Activated T-helper 1 cell treated with anti-CD3 and anti-CD28 coated beads, Interleukin-12 subunit alpha, Interleukin-12 subunit beta, Interleukin-2, Interleukin-4 antibody, amounts not matched to agents 30 ng/mL and 10 ng/mL and 1 ng/mL, durations not matched to agents 14 hours and 24 hours and 36 hours (primary cell): ENCODE measurements at regions of chr19 and their contacts with region 1.

Region 1: GRCh38 chr19:57410877-57411671 is at the start of gene ZNF17:
- DNase-seq: peak; percentile 87
- H3K4me3 Mint-ChIP-seq: peak within 1 kb of the TSS; percentile 95
- H3K27ac Mint-ChIP-seq: peak within 1 kb of the TSS; percentile 81
- H3K4me1 Mint-ChIP-seq: peaks cover 18% of the 10 kb centered on the region
- H3K27me3 Mint-ChIP-seq: no peaks in the 10 kb centered on the region
- total RNA-seq, gene ZNF17: 7.9 and 11.0 TPM in 2 replicates

Region 2: DNA sequence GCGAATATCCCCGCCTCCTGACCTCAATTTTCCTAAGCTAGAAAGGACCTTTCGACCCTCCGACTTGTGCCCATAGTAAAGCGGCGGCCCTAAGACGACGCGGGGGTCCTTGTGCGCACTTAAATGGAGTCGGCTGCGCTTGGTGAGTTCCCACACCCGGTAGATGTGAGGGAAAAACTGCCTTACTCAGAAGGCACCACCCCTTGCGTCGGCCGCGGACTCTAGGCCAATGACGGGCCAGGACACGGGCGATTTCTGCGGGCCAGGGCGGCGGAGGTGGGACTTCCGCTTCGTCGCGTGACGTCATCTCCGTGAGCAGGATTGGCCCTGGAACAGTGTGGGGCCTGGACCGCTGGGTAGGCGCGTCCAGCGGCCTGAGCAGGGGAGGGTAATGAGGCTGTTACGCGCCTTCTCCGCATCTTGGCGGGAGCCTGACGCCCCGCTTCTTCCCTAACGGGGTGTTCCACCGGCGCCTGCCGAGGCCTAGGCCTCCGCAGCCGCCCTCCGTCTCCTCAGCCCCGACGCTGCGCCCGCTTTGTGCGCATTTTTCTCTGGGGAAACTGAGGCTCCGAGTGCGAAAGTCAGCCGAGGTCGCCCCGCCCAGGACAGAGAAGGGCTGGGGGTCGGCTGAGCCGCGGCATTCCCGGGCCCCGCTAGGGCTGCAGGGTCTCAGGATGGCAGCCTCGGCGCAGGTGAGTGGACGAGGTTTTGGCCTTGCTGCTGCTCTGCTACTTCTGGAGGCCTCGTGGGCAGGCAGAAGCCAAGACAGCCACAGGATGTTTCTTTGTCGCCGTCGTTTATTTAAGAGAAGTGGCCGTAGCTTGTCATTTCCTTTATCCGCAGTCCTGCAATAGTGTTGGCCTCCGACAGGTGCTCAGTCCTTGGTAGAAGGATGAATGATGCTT is 90.6 kb before region 1 on chr19 and contains the start of gene ZNF543:
- intact Hi-C with region 1: loop called (anchors 1 kb)
- DNase-seq: peak; percentile 90
- H3K4me3 Mint-ChIP-seq: peak within 1 kb of the TSS; percentile 89
- H3K27ac Mint-ChIP-seq: peak within 1 kb of the TSS; percentile 97
- H3K4me1 Mint-ChIP-seq: peaks cover 28% of the 10 kb centered on the region
- H3K27me3 Mint-ChIP-seq: peaks cover 14% of the 10 kb centered on the region
- total RNA-seq, gene ZNF543: 5.1 and 5.4 TPM in 2 replicates

Region 3: DNA sequence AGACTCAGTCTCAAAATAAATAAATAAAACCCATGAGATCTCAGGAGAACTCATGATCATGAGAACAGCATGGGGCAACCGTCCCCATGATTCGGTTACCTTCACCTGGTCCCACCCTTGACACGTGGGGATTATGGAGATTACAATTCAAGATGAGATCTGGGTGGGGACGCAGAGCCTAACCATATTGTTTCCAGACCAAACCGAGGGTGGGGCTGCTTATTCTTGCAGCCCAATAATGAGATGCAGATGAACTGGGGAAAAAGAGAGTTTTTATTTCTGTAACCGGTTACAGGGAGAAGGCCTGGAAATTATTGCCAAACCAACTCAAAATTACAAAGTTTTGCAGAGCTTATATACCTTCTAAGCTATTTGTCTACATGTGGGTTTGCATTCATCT is 34.9 kb before region 1 on chr19:
- intact Hi-C with region 1: no loop called
- DNase-seq: no peak
- H3K4me3 Mint-ChIP-seq: no peak overlapping the region
- H3K27ac Mint-ChIP-seq: no peak overlapping the region
- H3K4me1 Mint-ChIP-seq: no peaks in the 10 kb centered on the region
- H3K27me3 Mint-ChIP-seq: no peaks in the 10 kb centered on the region

Region 4: DNA sequence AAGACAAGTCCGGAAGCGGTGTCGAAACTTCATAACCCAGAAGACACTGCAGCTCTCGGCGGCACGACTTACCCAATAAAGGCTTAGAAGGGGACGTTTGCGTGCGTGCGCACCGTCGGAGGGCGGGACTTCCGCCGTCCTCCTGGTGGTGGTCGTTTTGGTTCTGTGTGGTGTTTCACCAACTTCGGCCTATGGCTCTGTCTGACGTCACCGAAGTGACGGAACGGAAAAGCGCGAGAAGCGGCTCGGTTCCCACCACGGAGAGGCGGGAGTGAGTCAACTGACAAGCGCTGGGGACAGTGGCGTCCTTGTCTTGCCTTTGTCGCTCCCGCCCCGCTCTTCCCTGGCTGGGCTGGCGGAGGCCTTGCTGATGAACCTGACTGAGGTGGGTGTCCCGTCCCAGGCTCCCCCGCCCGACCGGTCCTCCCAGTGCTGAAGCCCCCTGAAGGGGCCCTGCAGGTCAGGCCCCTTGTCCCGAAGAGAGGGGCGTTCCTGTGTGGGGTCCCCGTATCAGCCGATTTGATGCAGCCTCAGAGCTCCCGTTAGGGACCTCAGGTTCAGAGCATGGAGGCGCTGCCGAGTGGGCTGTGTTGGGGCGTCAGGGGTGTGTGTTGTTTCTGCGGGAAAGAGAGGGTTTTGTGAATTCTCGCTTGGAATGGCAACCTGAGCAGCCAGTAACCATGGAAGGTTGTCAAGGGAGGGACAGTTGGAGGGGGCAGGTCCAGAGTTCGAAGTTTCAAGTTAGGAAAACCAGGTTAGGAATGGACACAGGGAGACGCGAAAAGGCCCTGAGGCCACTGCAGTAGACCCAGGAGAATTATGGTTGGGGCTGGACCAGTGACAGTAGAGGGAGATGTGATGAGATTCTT is 21.1 kb before region 1 on chr19 and contains the start of gene ZNF548:
- intact Hi-C with region 1: loop called (anchors 1 kb)
- DNase-seq: peak; percentile 92
- H3K4me3 Mint-ChIP-seq: peak within 1 kb of the TSS; percentile 94
- H3K27ac Mint-ChIP-seq: peak within 1 kb of the TSS; percentile 94
- H3K4me1 Mint-ChIP-seq: peaks cover 30% of the 10 kb centered on the region
- H3K27me3 Mint-ChIP-seq: no peaks in the 10 kb centered on the region
- total RNA-seq, gene ZNF548: 11.3 and 12.1 TPM in 2 replicates

Region 5: DNA sequence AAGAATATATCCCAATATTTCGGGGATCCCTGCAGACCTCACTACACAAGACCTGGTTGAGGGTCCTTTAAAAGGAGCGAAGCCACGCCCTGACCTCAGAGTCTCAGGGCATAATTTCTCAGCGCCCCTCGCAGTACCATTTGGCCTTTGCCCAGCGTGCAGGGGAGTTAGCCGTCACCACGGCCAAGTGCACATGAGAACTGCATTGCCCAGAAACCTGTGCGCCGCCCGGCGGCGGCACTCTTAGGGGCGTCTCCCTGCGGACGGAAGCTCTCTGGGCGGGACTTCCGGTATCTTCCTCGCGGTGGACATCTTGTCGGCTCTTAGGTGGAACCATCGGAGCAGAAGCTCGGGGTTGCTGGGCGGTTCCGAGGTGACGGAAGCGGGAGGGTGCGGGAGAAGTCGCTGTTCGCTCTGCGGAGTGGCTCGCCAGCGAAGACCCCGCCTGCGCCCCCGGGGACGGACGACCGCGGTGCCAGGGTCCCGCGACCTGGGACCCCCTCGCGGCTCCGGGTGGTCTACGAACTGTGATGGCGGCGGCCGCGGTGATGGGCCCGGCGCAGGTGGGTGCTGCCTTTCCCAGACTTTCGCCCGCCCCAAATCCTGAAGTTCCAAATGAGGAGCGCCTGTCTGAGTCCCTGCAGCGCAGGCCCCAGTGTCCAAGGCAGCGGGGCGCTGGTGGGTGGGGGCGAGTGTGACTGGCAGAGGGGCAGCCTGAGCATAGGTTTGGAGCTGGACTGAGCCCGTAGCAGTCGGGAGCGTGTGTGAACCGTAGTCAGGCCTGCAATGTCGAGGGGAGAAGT is 203.1 kb after region 1 on chr19 and contains the start of gene ZNF134:
- intact Hi-C with region 1: loop called (anchors 1 kb)
- DNase-seq: peak; percentile 84
- H3K4me3 Mint-ChIP-seq: peak within 1 kb of the TSS; percentile 90
- H3K27ac Mint-ChIP-seq: peak within 1 kb of the TSS; percentile 78
- H3K4me1 Mint-ChIP-seq: peaks cover 11% of the 10 kb centered on the region
- H3K27me3 Mint-ChIP-seq: no peaks in the 10 kb centered on the region
- total RNA-seq, gene ZNF134: 8.4 and 9.4 TPM in 2 replicates

Region 6: GRCh38 chr19:57746580-57747471 is 335.8 kb after region 1 on chr19 and contains the start of gene ZNF776:
- intact Hi-C with region 1: loop called (anchors 1 kb)
- DNase-seq: peak; percentile 79
- H3K4me3 Mint-ChIP-seq: peak within 1 kb of the TSS; percentile 90
- H3K27ac Mint-ChIP-seq: peak within 1 kb of the TSS; percentile 93
- H3K4me1 Mint-ChIP-seq: peaks cover 12% of the 10 kb centered on the region
- H3K27me3 Mint-ChIP-seq: peaks cover 2% of the 10 kb centered on the region
- total RNA-seq, gene ZNF776: 6.8 and 6.9 TPM in 2 replicates

Region 7: GRCh38 chr19:57914531-57914930 is 503.5 kb after region 1 on chr19:
- intact Hi-C with region 1: loop called (anchors 1 kb)
- DNase-seq: no peak
- H3K4me3 Mint-ChIP-seq: peak overlapping the region; percentile 91
- H3K27ac Mint-ChIP-seq: no peak overlapping the region
- H3K4me1 Mint-ChIP-seq: peaks cover 15% of the 10 kb centered on the region
- H3K27me3 Mint-ChIP-seq: no peaks in the 10 kb centered on the region

Region 8: DNA sequence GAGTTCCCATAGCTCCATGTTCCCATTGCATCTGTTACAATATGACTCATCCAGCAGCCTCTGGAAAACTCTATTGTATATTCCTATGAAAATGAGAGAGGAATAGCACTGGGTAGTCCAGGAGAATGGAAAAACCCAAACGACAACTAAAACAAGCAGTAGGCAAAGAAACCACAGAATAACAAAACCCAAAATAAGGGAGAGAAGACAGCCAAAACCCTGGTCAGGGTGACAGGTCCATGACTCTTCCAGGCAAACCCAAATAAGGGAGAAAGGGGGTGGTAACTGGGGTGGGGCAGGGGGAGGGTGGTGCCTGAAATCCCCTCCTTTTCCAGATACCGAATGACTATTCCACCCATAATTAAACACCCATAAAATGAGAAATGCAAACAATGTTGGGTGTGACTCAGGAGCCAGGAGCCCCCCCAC is 863.7 kb after region 1 on chr19:
- intact Hi-C with region 1: no loop called
- DNase-seq: no peak
- H3K4me3 Mint-ChIP-seq: no peak overlapping the region
- H3K27ac Mint-ChIP-seq: no peak overlapping the region
- H3K4me1 Mint-ChIP-seq: peaks cover 6% of the 10 kb centered on the region
- H3K27me3 Mint-ChIP-seq: no peaks in the 10 kb centered on the region